Endothelial cell of umbilical vein (primary cell): ENCODE measurements at regions of chr7 and their contacts with region 1.

Region 1: GRCh38 chr7:29189743-29190201 is 4.8 kb upstream of the CHN2 start:
- DNase-seq: peak; percentile 49
- H3K4me3 ChIP-seq: no peak overlapping the region
- H3K27ac ChIP-seq: no peak overlapping the region
- H3K4me1 ChIP-seq: peaks cover 3% of the 10 kb centered on the region
- H3K27me3 ChIP-seq: peaks cover 11 to 19% of the 10 kb centered on the region in 2 experiments
- CTCF ChIP-seq: peak; percentile 71 to 96
- POLR2A ChIP-seq: no peak

Region 2: DNA sequence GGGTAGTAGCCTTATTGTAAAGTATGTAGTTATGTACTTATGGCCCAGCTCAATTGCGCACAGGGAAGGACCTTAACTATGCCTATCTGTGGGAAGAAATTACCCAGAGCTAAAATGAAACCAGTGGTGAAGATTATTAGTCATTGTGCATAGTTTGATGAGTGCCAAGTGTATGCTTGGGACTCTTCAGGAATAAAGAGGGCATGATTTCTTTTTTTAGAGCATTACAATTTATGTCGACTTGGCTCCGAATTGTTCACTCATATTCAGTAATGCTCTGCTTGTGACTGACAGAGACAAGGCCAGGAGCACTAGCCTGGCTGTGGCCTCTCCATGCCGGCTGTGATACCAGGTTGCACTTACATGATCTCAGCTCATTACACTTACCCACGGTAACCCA is 501.1 kb before region 1 on chr7:
- CTCF ChIA-PET with region 1: no interaction called
- POLR2A ChIA-PET with region 1: no interaction called
- dilution Hi-C with region 1: no loop called
- intact Hi-C with region 1: no loop called
- DNase-seq: peak; percentile 49
- H3K4me3 ChIP-seq: peak overlapping the region in 1 of 3 experiments; percentile 20
- H3K27ac ChIP-seq: no peak overlapping the region
- H3K4me1 ChIP-seq: peaks cover 30% of the 10 kb centered on the region
- H3K27me3 ChIP-seq: no peaks in the 10 kb centered on the region
- CTCF ChIP-seq: no peak
- POLR2A ChIP-seq: no peak

Region 3: DNA sequence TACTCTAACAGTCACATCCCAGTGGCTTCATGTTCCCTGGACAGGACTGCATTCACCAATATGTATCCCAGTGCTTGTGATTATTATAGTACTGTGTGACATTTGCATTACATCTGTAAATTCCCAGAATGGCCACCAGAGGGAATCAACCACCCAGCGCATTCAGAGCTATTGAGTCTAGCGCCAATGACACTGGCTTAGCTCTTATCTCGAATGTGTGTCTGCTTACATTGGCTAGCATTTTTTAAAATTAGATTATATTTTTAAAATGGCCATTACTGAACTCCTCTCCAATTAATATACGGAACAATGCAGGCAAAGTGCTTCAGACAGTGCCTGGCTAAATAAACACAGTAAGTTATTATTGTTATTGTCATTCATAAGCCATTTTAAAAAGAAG is 267.9 kb before region 1 on chr7:
- CTCF ChIA-PET with region 1: interaction called, 48 read pairs
- POLR2A ChIA-PET with region 1: no interaction called
- dilution Hi-C with region 1: no loop called
- intact Hi-C with region 1: loop called (anchors 1 kb)
- DNase-seq: peak; percentile 67
- H3K4me3 ChIP-seq: no peak overlapping the region
- H3K27ac ChIP-seq: no peak overlapping the region
- H3K4me1 ChIP-seq: no peaks in the 10 kb centered on the region
- H3K27me3 ChIP-seq: peaks cover 4 to 6% of the 10 kb centered on the region in 2 experiments
- CTCF ChIP-seq: peak; percentile 74 to 76
- POLR2A ChIP-seq: no peak

Region 4: GRCh38 chr7:29113384-29114103 is 76.2 kb before region 1 on chr7:
- CTCF ChIA-PET with region 1: interaction called, 13 read pairs
- POLR2A ChIA-PET with region 1: no interaction called
- dilution Hi-C with region 1: no loop called
- intact Hi-C with region 1: loop called (anchors 2 kb)
- DNase-seq: peak; percentile 46
- H3K4me3 ChIP-seq: no peak overlapping the region
- H3K27ac ChIP-seq: no peak overlapping the region
- H3K4me1 ChIP-seq: peaks cover 16% of the 10 kb centered on the region
- H3K27me3 ChIP-seq: peaks cover 8 to 13% of the 10 kb centered on the region in 2 experiments
- CTCF ChIP-seq: peak; percentile 3 to 42
- POLR2A ChIP-seq: no peak

Region 5: GRCh38 chr7:29177963-29178600 is 11.7 kb before region 1 on chr7:
- CTCF ChIA-PET with region 1: interaction called, 27 read pairs
- POLR2A ChIA-PET with region 1: no interaction called
- dilution Hi-C with region 1: no loop called
- intact Hi-C with region 1: no loop called
- DNase-seq: peak; percentile 90
- H3K4me3 ChIP-seq: no peak overlapping the region
- H3K27ac ChIP-seq: peak overlapping the region; percentile 37
- H3K4me1 ChIP-seq: peaks cover 9% of the 10 kb centered on the region
- H3K27me3 ChIP-seq: no peaks in the 10 kb centered on the region
- CTCF ChIP-seq: no peak
- POLR2A ChIP-seq: no peak

Region 6: GRCh38 chr7:29255906-29256782 is 66.4 kb after region 1 on chr7:
- CTCF ChIA-PET with region 1: interaction called, 22 read pairs
- POLR2A ChIA-PET with region 1: no interaction called
- dilution Hi-C with region 1: no loop called
- intact Hi-C with region 1: loop called (anchors 2 kb)
- DNase-seq: peak; percentile 70
- H3K4me3 ChIP-seq: no peak overlapping the region
- H3K27ac ChIP-seq: peak overlapping the region; percentile 10
- H3K4me1 ChIP-seq: peaks cover 18% of the 10 kb centered on the region
- H3K27me3 ChIP-seq: no peaks in the 10 kb centered on the region
- CTCF ChIP-seq: no peak
- POLR2A ChIP-seq: no peak

Region 7: GRCh38 chr7:29299986-29300609 is 110.3 kb after region 1 on chr7:
- CTCF ChIA-PET with region 1: interaction called, 67 read pairs
- POLR2A ChIA-PET with region 1: no interaction called
- dilution Hi-C with region 1: no loop called
- intact Hi-C with region 1: loop called (anchors 1 kb)
- DNase-seq: no peak
- H3K4me3 ChIP-seq: no peak overlapping the region
- H3K27ac ChIP-seq: no peak overlapping the region
- H3K4me1 ChIP-seq: peaks cover 8% of the 10 kb centered on the region
- H3K27me3 ChIP-seq: no peaks in the 10 kb centered on the region
- CTCF ChIP-seq: no peak
- POLR2A ChIP-seq: no peak

Region 8: DNA sequence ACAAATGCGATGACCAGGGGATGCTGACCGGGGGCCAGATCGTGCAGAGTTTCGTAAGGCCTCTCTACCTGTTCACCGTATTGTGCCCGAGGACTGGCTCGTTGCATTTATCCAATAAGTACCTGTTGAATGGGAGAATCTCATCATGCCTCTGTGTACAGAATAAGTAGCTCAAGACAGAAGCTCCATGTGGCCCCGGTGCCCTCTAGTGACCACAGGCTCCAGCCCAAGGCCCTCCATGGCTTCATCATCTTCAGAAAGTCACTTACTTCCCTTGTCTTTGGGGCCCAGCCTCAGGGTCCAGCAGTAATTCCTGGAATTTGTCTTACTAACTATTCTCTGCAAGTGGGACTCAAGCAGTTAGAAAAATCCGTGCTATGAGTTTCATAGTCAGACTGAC is 155.8 kb after region 1 on chr7:
- CTCF ChIA-PET with region 1: interaction called, 105 read pairs
- POLR2A ChIA-PET with region 1: no interaction called
- dilution Hi-C with region 1: no loop called
- intact Hi-C with region 1: loop called (anchors 1 kb)
- DNase-seq: peak; percentile 41
- H3K4me3 ChIP-seq: no peak overlapping the region
- H3K27ac ChIP-seq: no peak overlapping the region
- H3K4me1 ChIP-seq: no peaks in the 10 kb centered on the region
- H3K27me3 ChIP-seq: peaks cover 1 to 5% of the 10 kb centered on the region in 2 experiments
- CTCF ChIP-seq: peak; percentile 45 to 49
- POLR2A ChIP-seq: no peak